ENCODE measurements at regions of chr16 and their contacts with region 1.

Region 1: GRCh38 chr16:19886073-19886941 is 1.7 kb upstream of the GPRC5B start:
- DNase-seq: peak; percentile 91
- H3K4me3 Mint-ChIP-seq: peak overlapping the region; percentile 72
- H3K27ac Mint-ChIP-seq: no peak overlapping the region
- H3K4me1 Mint-ChIP-seq: peaks cover 24% of the 10 kb centered on the region
- H3K27me3 Mint-ChIP-seq: peaks cover 21% of the 10 kb centered on the region

Region 2: GRCh38 chr16:19389246-19389645 is 497.1 kb before region 1 on chr16:
- CTCF ChIA-PET with region 1: no interaction called
- intact Hi-C with region 1: loop called (anchors 5 kb)
- DNase-seq: peak; percentile 67
- H3K4me3 Mint-ChIP-seq: no peak overlapping the region
- H3K27ac Mint-ChIP-seq: no peak overlapping the region
- H3K4me1 Mint-ChIP-seq: no peaks in the 10 kb centered on the region
- H3K27me3 Mint-ChIP-seq: peaks cover 18% of the 10 kb centered on the region

Region 3: GRCh38 chr16:19583665-19584300 is 302.5 kb before region 1 on chr16:
- CTCF ChIA-PET with region 1: interaction called, 6 read pairs
- intact Hi-C with region 1: loop called (anchors 1 kb)
- DNase-seq: peak; percentile 43
- H3K4me3 Mint-ChIP-seq: no peak overlapping the region
- H3K27ac Mint-ChIP-seq: no peak overlapping the region
- H3K4me1 Mint-ChIP-seq: peaks cover 15% of the 10 kb centered on the region
- H3K27me3 Mint-ChIP-seq: no peaks in the 10 kb centered on the region

Region 4: GRCh38 chr16:19717771-19718602 is 168.3 kb before region 1 on chr16 and contains the starts of genes IQCK and KNOP1:
- CTCF ChIA-PET with region 1: no interaction called
- intact Hi-C with region 1: loop called (anchors 2 kb)
- DNase-seq: peak; percentile 89
- H3K4me3 Mint-ChIP-seq: peak within 1 kb of the TSS; percentile 91
- H3K27ac Mint-ChIP-seq: peak within 1 kb of the TSS; percentile 78
- H3K4me1 Mint-ChIP-seq: peaks cover 45% of the 10 kb centered on the region
- H3K27me3 Mint-ChIP-seq: no peaks in the 10 kb centered on the region
- total RNA-seq, gene IQCK: 2.8 to 3.9 TPM
- total RNA-seq, gene KNOP1: 24.4 to 26.1 TPM